ENCODE measurements at regions of chr14 and their contacts with region 1.

Region 1: DNA sequence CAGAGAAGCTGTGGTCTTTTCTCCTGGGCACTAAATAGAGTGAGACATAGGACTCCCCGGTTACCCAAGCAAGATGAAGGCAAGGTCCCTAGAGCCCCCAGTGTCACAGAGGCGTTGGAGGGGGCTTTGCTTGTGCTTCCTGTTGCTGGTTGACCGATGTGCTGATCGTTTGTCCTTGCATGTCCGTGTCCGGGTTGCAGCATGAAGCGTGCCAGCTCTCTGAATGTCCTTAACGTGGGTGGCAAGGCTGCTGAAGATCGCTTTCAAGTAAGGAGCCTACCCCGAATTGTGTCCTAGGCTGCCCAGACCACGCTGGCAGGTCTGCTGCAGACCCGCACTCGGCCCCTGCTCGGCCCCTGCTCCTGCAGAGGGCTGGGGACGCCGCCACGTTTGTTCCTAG is 23.1 kb downstream of the XRCC3 start:
- DNase-seq: no peak
- H3K4me3 ChIP-seq: no peak overlapping the region
- H3K27ac ChIP-seq: no peak overlapping the region
- H3K4me1 ChIP-seq: peaks cover 15% of the 10 kb centered on the region
- H3K27me3 ChIP-seq: no peaks in the 10 kb centered on the region
- CTCF ChIP-seq: no peak

Region 2: DNA sequence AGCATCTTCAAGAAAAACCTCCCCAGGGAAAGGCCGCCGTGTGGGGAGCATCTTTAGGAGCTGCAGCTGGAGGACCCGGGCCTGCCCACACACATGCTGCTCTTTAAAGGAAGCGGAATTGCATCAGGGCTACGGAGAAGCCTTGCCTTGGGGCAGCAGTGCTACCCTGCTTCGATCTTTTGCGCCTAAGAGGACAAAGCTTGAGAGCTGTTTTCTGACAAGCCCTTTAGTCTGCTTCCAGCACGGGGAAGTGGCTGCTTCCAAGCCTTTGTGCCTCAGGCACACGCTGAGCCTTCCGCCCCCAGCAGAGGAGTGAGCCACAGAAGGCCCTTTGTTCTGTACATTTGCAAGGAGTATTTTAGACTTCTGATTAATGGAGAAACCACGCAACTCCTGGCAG is 97.9 kb before region 1 on chr14:
- CTCF ChIA-PET with region 1: no interaction called
- dilution Hi-C with region 1: loop called (anchors 5 kb)
- in situ Hi-C with region 1: no loop called
- intact Hi-C with region 1: no loop called
- DNase-seq: peak; percentile 93
- H3K4me3 ChIP-seq: peak overlapping the region in 1 of 3 experiments; percentile 13
- H3K27ac ChIP-seq: peak overlapping the region; percentile 43
- H3K4me1 ChIP-seq: peaks cover 37% of the 10 kb centered on the region
- H3K27me3 ChIP-seq: no peaks in the 10 kb centered on the region
- CTCF ChIP-seq: no peak

Region 3: DNA sequence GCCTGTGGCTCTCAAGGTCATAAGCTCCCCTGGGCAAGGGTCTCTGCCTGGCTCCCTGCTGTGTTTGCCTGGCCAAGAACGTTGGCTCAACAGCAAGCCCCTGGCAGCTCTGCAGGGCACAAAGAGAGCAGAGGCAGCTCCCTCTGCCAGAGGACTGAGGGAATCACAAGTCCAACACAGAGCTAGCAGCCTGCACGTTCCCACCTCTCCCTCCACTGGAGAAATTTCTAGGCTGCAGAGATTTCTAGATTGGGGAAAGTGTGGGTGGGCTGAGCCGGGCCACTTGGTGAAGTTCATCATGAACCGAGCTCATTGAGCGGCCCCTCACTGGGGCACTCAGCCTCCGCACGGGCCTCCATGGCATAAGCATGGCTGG is 43.3 kb after region 1 on chr14:
- CTCF ChIA-PET with region 1: interaction called, 12 read pairs
- dilution Hi-C with region 1: no loop called
- in situ Hi-C with region 1: no loop called
- intact Hi-C with region 1: no loop called
- DNase-seq: no peak
- H3K4me3 ChIP-seq: no peak overlapping the region
- H3K27ac ChIP-seq: no peak overlapping the region
- H3K4me1 ChIP-seq: no peaks in the 10 kb centered on the region
- H3K27me3 ChIP-seq: no peaks in the 10 kb centered on the region
- CTCF ChIP-seq: no peak

Measured in mammary epithelial cell (primary cell).